ENCODE measurements at regions of chr17 and their contacts with region 1.

Region 1: DNA sequence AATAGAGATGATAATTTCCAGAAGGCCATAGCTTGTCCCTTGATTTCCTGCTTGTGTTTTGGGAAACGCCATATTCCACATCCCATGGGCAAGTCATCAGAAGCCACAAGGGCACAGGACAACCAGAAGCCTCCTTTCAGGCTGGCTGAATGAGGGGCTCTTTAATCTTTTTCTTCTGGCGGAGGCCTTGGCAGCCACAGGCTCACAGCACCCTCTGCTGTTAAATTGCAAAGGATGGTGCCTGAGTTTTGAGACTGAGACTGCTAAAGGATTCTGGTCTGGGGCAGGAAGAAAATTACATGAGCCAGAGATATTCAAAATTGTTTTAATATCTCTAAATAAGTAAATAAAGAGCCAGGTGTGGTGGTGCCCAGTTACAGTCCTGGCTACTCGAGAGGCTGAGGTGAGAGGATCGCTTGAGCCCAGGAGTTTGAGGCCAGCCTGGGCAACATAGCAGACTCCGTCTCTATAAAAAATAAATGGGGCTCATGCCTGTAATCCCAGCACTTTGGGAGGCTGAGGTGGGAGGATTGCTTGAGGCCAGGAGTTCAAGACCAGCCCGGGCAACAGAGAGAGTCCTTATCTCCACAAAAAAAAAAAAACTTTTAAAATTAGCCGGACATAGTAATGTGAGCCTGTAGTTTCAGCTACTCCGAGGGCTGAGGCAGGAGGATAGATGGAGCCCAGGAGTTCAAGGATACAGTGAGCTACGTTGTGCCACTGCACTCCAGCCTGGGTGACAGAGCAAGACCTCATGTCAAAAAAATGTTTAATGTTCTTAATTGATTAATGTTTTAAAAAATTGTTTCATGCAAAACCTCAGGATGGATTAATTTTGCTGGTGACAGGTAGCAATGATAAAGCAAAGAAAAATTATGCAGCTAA is 26.3 kb downstream of the AARSD1 start:
- DNase-seq: peak in 8 of 10 donors; percentile 17 to 90 (median 33)

Region 2: GRCh38 chr17:42843358-42843934 is 94.5 kb before region 1 on chr17:
- intact Hi-C with region 1: loop called (anchors 2 kb)
- DNase-seq: peak in 2 of 10 donors; percentile 26 to 45

Region 3: GRCh38 chr17:43068570-43069367 is 130.8 kb after region 1 on chr17:
- intact Hi-C with region 1: no loop called
- DNase-seq: no peak

Measured in posterior cingulate gyrus (tissue), 11 donors.